ENCODE measurements at regions of chr3 and their contacts with region 1.

Region 1: DNA sequence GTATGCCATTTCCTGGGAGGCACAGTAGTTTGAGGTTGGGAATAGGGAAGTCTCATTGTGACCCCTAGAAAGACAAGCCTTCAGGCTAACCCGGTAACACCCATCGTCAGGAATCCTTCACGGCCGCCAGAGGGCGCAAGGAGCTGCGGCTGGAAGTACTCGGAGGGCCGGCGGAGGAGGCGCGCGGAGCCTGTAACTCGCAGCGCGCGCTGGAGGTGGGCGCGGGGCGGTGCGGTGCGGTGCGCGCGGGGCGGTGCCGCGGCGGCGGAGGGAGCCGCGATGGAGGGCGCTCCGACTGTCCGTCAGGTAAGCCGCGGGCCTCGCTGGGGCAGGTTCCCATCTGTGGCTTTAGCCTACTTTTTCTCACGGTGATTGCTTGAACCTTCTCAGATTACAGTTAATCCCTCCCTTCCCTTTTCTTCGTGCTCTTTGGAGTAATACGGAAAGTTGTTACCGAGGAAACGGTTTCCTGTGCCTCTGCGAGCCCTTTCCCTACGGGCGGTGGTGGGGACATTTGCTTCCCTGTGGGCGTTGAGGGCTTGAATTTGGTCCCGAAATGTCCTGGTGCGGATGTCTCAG is at the start of gene GRAMD1C:
- DNase-seq: no peak
- H3K4me3 ChIP-seq: peak within 1 kb of the TSS; percentile 51
- H3K27me3 ChIP-seq: no peaks in the 10 kb centered on the region
- CTCF ChIP-seq: peak; percentile 88
- polyA plus RNA-seq, gene GRAMD1C: 0.48 and 1.2 TPM in 2 replicates

Region 2: GRCh38 chr3:113736548-113737089 is 102.1 kb before region 1 on chr3:
- CTCF ChIA-PET with region 1: interaction called, 19 read pairs
- POLR2A ChIA-PET with region 1: no interaction called
- DNase-seq: no peak
- H3K4me3 ChIP-seq: no peak overlapping the region
- H3K27me3 ChIP-seq: no peaks in the 10 kb centered on the region
- CTCF ChIP-seq: peak; percentile 58

Region 3: DNA sequence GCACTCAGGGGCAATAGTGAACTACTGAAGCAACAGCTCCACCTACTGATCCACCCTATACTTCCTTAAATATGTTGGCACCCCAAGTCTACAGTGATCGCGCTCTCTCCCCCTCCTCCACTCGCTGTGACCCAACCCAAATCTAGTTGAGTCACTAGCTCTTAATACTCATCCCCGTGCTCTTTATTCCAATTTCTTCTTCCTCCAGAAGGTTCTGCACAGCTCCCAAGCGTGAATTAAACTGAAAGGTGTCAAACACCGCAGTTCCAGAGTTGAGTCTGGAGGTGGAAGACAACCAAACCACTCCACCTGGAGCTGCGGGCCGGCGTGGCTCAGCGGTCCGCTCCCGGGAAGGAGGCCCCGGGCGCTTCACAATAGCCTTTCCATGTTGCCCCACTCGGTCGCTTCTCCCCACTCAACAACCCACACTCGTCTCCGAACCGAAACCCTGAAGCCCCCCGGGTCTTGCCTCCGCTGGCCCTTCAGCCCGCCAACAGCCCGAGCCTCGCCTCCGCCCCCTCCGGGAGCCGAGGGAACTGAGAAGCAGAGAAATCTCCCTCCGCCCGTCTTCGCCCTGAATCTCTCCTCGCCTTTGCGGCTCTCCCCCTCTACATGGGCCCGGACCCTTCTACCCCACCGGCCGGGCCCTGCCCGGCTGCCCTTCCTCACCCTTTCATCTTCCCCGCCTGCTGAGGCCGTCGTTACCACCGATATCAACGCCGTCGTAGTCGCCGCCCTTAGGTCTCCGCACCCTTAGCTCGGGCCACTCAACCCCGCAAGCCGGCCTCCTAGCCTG is 93.2 kb before region 1 on chr3:
- CTCF ChIA-PET with region 1: interaction called, 10 read pairs
- POLR2A ChIA-PET with region 1: no interaction called
- DNase-seq: peak; percentile 62
- H3K4me3 ChIP-seq: peak overlapping the region; percentile 87
- H3K27me3 ChIP-seq: no peaks in the 10 kb centered on the region
- CTCF ChIP-seq: peak; percentile 68

Region 4: DNA sequence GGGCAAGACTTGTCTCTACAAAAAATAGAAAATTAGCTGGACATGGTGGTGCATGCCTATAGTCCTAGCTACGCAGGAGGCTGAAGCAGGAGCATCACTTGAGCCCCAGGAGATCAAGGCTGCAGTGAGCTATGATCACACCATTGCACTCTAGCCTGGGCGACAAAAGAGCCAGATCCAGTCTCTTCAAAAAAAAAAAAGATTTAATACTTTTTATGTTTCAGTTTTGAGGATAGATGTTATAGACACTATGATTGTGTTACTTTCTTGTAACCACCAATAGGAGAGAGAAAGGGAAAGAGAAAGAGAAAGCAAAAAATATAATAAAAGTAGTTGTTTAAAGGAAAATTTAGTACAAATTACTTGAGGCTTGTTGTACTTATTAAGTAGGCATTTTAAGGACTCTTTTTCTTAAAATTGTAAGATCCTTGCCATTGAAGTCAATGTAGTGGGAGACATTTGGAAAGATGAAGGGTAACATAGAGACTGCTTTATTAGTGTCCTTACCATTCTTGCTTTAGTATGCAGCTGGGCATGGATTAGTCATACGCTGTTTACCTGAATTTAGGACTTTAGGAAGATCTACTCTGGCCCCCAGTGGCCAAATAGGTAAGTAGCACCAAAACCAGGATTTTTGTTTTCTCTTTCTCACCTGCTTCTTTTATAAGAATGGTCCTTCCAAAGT is 74.0 kb after region 1 on chr3:
- CTCF ChIA-PET with region 1: interaction called, 39 read pairs
- POLR2A ChIA-PET with region 1: no interaction called
- DNase-seq: no peak
- H3K4me3 ChIP-seq: no peak overlapping the region
- H3K27me3 ChIP-seq: no peaks in the 10 kb centered on the region
- CTCF ChIP-seq: peak; percentile 69

Measured in BJ (cell line).